ENCODE measurements at regions of chr14 and their contacts with region 1.

Region 1: GRCh38 chr14:103808403-103809001 is 38.9 kb downstream of the PPP1R13B start:
- DNase-seq: peak; percentile 63 to 77
- ATAC-seq: peak; percentile 89

Region 2: GRCh38 chr14:103973354-103973753 is 164.9 kb after region 1 on chr14:
- intact Hi-C with region 1: loop called in 1 of 2 experiments (anchors 10 kb)
- DNase-seq: no peak
- ATAC-seq: no peak

Measured in left colon (tissue), 2 donors.